GM13976 (cell line): ENCODE measurements at regions of chr2 and their contacts with region 1.

Region 1: GRCh38 chr2:30089171-30089570 is 57.6 kb upstream of the YPEL5 start:
- DNase-seq: no peak
- CTCF ChIP-seq: no peak

Region 2: DNA sequence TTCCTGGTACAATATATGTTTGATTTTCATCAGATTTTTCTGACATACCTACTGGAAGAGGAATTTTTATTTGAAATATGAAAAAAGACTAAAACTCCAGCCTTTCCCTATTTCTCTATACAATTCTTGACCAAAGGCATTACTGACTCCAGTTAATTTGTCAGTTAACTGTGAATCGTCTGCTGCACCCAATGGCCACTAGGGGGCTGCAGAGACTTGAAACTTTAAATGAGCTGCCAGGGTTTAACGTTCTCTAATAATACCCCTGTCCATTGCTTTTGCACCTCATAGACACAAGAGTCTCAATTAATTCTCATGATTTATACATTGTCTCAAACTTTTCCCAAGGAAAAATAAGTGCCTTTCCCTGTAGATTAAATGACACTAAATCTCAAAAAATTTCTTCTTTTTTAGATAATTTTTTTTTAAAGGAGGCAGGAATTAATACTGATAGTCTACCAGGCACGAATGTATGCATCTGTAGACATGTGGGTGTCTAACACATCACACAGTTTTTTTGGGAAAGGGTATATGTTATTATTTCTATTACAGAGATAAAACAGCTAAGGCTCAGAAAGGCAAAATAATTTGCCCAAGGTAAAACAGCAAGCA is 166.0 kb before region 1 on chr2:
- in situ Hi-C with region 1: loop called (anchors 10 kb)
- DNase-seq: peak; percentile 66
- CTCF ChIP-seq: peak; percentile 79